Transverse colon (tissue), 4 donors: ENCODE measurements at regions of chr1 and their contacts with region 1.

Region 1: GRCh38 chr1:26602378-26602959 is 72.9 kb downstream of the RPS6KA1 start:
- DNase-seq: peak; percentile 22
- H3K4me3 ChIP-seq: no peak overlapping the region
- H3K27ac ChIP-seq: no peak overlapping the region
- H3K4me1 ChIP-seq: peaks cover 0 to 8% (median 2%) of the 10 kb centered on the region in 4 donors
- H3K27me3 ChIP-seq: no peaks in the 10 kb centered on the region
- CTCF ChIP-seq: peak; percentile 83 to 97 (median 87)
- EP300 ChIP-seq: no peak
- POLR2A ChIP-seq: no peak

Region 2: GRCh38 chr1:26677306-26678115 is 75.0 kb after region 1 on chr1:
- in situ Hi-C with region 1: loop called in 1 of 4 experiments (anchors 5 kb)
- intact Hi-C with region 1: loop called (anchors 5 kb)
- DNase-seq: peak; percentile 92
- H3K4me3 ChIP-seq: peak overlapping the region in 1 of 4 donors; percentile 17
- H3K27ac ChIP-seq: peak overlapping the region in 3 of 4 donors; percentile 10 to 38 (median 30)
- H3K4me1 ChIP-seq: peaks cover 0 to 13% (median 11%) of the 10 kb centered on the region in 4 donors
- H3K27me3 ChIP-seq: no peaks in the 10 kb centered on the region
- CTCF ChIP-seq: peak; percentile 61 to 94 (median 62)
- EP300 ChIP-seq: no peak
- POLR2A ChIP-seq: no peak

Region 3: GRCh38 chr1:26787706-26788514 is 185.4 kb after region 1 on chr1 and contains the start of gene PIGV:
- in situ Hi-C with region 1: loop called in 1 of 4 experiments (anchors 10 kb)
- intact Hi-C with region 1: loop called (anchors 1 kb)
- DNase-seq: peak; percentile 90
- H3K4me3 ChIP-seq: peak within 1 kb of the TSS; percentile 73 to 90 (median 78)
- H3K27ac ChIP-seq: peak within 1 kb of the TSS; percentile 98 to 99 (median 98)
- H3K4me1 ChIP-seq: peaks cover 20 to 58% (median 50%) of the 10 kb centered on the region in 4 donors
- H3K27me3 ChIP-seq: no peaks in the 10 kb centered on the region
- CTCF ChIP-seq: peak in 3 of 5 experiments; percentile 6 to 58 (median 51)
- EP300 ChIP-seq: no peak
- POLR2A ChIP-seq: peak; percentile 81
- total RNA-seq, gene PIGV: 16.1 to 32.2 (median 24.2) TPM

Region 4: GRCh38 chr1:26799479-26800142 is 197.1 kb after region 1 on chr1:
- in situ Hi-C with region 1: loop called in 1 of 4 experiments (anchors 10 kb)
- intact Hi-C with region 1: no loop called
- DNase-seq: peak; percentile 42
- H3K4me3 ChIP-seq: no peak overlapping the region
- H3K27ac ChIP-seq: peak overlapping the region; percentile 62 to 79 (median 72)
- H3K4me1 ChIP-seq: peaks cover 7 to 25% (median 20%) of the 10 kb centered on the region in 4 donors
- H3K27me3 ChIP-seq: no peaks in the 10 kb centered on the region
- CTCF ChIP-seq: no peak
- EP300 ChIP-seq: peak; percentile 43
- POLR2A ChIP-seq: no peak

Region 5: DNA sequence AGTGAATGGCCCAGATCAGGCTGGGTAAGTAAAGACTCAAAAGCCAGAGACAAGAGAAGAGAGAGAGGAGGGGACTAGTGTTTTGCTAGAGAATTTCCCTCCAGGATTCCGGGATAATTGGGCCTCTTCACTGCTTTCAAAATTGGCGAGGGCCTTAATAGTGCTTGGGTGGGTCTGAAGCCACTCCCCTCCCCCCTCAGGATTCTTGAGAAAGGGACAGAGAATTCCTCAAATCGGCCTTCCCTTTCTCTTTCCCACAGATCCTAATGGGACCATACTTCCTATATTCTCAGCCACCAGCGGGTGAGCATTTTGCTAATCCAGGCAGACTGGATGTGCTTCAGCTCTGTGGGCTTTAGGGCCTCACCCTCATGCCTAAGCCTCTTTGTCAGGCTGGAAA is 272.4 kb after region 1 on chr1:
- in situ Hi-C with region 1: loop called in 1 of 4 experiments (anchors 25 kb)
- intact Hi-C with region 1: loop called (anchors 10 kb)
- DNase-seq: no peak
- H3K4me3 ChIP-seq: no peak overlapping the region
- H3K27ac ChIP-seq: no peak overlapping the region
- H3K4me1 ChIP-seq: peaks cover 0 to 20% (median 6%) of the 10 kb centered on the region in 4 donors
- H3K27me3 ChIP-seq: no peaks in the 10 kb centered on the region
- CTCF ChIP-seq: no peak
- EP300 ChIP-seq: no peak
- POLR2A ChIP-seq: no peak

Region 6: DNA sequence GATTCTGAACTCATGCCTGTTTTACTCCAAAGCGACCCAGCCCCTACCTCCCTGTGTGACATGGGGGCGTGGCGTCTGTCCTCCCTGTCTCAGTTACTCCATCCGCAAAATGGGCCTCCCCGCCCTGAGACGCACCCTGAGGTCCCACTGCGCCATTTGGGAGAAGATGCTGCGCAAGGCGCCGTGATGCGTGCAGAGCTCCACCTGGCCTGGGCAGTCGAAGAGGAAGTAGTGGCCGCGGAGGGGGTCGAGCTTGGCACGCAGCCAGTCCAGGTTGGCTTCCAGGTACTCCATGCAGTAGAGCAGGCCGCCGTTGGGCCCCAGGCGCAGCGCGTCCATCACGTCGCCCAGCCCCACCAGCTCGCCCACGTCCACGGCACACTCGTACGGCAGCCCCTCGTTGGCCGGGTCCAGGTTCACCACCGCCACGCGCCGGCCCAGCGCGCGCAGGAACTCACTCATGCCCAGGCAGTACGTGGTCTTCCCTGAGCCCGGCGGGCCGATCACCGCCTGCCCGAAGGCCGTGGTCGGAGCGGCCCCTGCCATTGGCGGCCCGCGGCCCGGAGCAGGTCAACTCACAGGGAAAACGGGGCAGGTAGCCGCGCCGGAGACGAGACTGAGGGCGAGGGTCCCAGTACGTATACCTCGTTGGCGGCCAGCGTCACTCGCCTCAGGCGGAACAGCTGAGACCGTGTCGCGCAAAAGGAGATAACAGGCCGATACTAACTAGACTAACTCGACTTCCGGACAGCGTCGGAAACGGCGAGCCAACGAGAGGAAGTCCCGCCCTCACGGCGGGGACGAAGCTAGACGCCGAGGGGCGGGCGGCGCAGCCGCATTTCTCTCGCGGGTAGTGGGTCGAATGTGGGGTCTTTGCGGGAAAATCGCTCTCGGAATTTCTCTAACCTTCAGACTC is 287.3 kb after region 1 on chr1 and contains the start of gene GPN2:
- in situ Hi-C with region 1: loop called in 1 of 4 experiments (anchors 25 kb)
- intact Hi-C with region 1: no loop called
- DNase-seq: peak; percentile 82
- H3K4me3 ChIP-seq: peak within 1 kb of the TSS; percentile 63 to 99 (median 80)
- H3K27ac ChIP-seq: peak within 1 kb of the TSS; percentile 91 to 98 (median 94)
- H3K4me1 ChIP-seq: peaks cover 5 to 23% (median 17%) of the 10 kb centered on the region in 4 donors
- H3K27me3 ChIP-seq: no peaks in the 10 kb centered on the region
- CTCF ChIP-seq: no peak
- EP300 ChIP-seq: no peak
- POLR2A ChIP-seq: peak; percentile 88
- total RNA-seq, gene GPN2: 14.7 to 75.2 (median 28.7) TPM

Region 7: GRCh38 chr1:26949926-26950319 is 347.5 kb after region 1 on chr1:
- in situ Hi-C with region 1: no loop called
- intact Hi-C with region 1: no loop called
- DNase-seq: no peak
- H3K4me3 ChIP-seq: no peak overlapping the region
- H3K27ac ChIP-seq: no peak overlapping the region
- H3K4me1 ChIP-seq: peaks cover 3 to 21% (median 12%) of the 10 kb centered on the region in 4 donors
- H3K27me3 ChIP-seq: no peaks in the 10 kb centered on the region
- CTCF ChIP-seq: no peak
- EP300 ChIP-seq: no peak
- POLR2A ChIP-seq: no peak